ENCODE measurements at regions of chr3 and their contacts with region 1.

Region 1: GRCh38 chr3:117019082-117019713 is 309.6 kb downstream of the TUSC7 start:
- H3K4me3 Mint-ChIP-seq: no peak overlapping the region
- H3K27ac Mint-ChIP-seq: no peak overlapping the region
- H3K4me1 Mint-ChIP-seq: peaks cover 27% of the 10 kb centered on the region
- H3K27me3 Mint-ChIP-seq: peaks cover 19% of the 10 kb centered on the region

Region 2: DNA sequence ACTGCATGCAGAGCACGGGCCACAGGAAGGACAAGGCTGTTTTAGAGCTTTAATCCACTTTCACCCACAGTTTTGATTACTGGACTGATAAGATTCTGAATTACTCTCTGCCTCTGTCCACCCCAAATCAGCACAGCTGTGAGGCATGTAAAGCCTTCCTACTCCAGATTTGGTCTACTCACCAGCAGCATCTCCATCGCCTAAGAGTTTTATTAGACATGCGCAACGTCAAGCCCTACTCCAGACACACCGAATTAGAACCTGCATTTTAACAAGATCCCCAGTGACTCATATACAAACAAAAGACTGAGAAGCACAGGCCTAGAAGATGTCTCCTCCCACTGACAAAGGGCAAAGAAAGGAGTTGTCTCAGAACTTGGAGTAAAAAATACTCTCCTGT is 88.4 kb before region 1 on chr3:
- intact Hi-C with region 1: no loop called
- H3K4me3 Mint-ChIP-seq: no peak overlapping the region
- H3K27ac Mint-ChIP-seq: no peak overlapping the region
- H3K4me1 Mint-ChIP-seq: no peaks in the 10 kb centered on the region
- H3K27me3 Mint-ChIP-seq: no peaks in the 10 kb centered on the region

Region 3: DNA sequence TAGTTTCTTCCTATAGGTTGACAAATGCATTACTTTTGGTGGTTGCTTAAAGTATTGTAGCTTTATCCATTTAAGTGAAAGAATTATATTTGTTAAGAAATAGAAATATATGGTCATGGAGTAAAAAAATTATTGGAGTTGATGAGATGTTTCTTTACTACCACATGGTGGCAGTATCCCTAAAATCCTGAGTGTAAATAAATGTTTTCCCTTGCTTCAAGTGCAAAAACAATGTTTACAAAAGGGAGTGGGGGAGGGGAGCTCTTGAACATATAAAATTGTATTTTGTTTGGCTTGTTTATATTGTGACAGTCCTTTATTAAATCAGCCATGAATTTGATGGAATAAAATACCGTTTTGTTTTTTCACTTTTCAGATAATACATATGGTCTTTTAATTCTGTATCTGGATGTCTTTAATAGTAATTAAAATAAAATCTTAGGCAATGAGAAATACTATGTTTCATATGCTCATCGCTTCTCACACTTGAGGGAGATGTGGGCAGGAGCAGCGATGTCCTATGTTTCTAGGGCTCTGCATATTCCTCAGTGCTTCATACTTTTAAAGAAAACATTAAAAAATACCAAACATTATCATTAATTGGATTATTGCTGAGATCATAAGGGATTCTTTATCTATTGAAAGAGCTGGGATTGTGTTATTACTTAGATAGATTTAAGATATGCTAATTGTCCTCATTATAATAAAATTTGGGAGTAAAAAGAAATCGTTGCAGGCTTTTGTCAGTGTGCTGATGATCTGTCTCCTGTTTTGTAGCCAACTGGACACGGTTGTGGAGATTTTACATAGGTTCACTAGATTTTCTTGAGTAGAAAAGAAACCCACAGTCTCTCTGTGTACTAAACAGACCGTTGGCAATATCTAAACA is 40.1 kb after region 1 on chr3:
- intact Hi-C with region 1: loop called (anchors 5 kb)
- H3K4me3 Mint-ChIP-seq: no peak overlapping the region
- H3K27ac Mint-ChIP-seq: no peak overlapping the region
- H3K4me1 Mint-ChIP-seq: peaks cover 18% of the 10 kb centered on the region
- H3K27me3 Mint-ChIP-seq: no peaks in the 10 kb centered on the region

Region 4: DNA sequence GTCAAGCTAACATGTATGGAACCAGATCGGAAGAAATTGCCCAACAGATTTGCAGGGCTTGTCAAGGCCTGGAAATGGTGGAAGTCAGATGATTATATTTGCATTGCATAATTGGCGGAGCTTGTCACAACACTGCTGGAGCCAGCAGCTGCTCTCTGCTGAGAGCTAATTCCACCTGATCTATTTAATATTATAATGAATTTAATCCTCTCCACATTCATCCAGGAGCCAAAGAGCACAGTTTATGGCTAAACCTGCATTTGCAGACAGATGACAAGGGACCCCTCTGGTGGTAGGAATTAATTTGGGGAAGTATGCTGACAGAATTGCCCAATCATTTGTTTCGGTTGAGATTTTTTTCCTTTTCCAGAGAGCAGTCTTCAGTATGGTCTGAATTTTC is 420.6 kb after region 1 on chr3:
- intact Hi-C with region 1: loop called (anchors 5 kb)
- H3K4me3 Mint-ChIP-seq: no peak overlapping the region
- H3K27ac Mint-ChIP-seq: no peak overlapping the region
- H3K4me1 Mint-ChIP-seq: peaks cover 20% of the 10 kb centered on the region
- H3K27me3 Mint-ChIP-seq: no peaks in the 10 kb centered on the region

Region 5: DNA sequence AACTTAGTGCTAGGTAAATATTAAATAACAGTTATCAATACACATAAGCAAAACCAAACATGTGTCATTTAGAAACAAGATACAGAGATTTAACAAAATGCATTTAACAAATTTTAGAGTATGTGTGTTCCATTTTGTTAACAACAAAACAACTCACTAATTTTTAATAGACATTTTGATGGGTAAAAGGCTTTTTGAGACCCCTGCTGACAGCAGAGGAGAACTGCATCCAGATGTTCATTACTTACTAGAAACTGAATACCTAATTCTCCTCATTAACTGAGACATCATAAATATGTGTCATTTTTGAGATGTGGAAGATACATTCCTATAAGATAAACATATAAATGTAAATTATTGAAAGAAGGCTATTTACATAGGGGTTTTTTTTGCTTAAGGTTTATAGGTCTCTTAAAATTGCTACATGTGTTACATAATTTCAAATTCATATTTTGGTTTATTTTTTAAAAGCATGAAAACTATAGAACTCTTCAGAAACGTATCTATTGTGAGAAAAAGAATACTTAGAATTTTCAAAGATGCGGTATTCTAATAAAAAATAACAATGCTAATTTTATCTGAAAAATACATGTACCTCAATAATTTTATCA is 700.2 kb after region 1 on chr3:
- intact Hi-C with region 1: loop called (anchors 5 kb)
- H3K4me3 Mint-ChIP-seq: no peak overlapping the region
- H3K27ac Mint-ChIP-seq: no peak overlapping the region
- H3K4me1 Mint-ChIP-seq: peaks cover 28% of the 10 kb centered on the region
- H3K27me3 Mint-ChIP-seq: peaks cover 5% of the 10 kb centered on the region

Measured in dendritic cell treated with granulocyte-macrophage colony-stimulating factor and Interleukin-4, amounts not matched to agents 40 ng/mL and 50 ng/mL, for 4 days (primary cell).